ENCODE measurements at regions of chr17 and their contacts with region 1.

Region 1: DNA sequence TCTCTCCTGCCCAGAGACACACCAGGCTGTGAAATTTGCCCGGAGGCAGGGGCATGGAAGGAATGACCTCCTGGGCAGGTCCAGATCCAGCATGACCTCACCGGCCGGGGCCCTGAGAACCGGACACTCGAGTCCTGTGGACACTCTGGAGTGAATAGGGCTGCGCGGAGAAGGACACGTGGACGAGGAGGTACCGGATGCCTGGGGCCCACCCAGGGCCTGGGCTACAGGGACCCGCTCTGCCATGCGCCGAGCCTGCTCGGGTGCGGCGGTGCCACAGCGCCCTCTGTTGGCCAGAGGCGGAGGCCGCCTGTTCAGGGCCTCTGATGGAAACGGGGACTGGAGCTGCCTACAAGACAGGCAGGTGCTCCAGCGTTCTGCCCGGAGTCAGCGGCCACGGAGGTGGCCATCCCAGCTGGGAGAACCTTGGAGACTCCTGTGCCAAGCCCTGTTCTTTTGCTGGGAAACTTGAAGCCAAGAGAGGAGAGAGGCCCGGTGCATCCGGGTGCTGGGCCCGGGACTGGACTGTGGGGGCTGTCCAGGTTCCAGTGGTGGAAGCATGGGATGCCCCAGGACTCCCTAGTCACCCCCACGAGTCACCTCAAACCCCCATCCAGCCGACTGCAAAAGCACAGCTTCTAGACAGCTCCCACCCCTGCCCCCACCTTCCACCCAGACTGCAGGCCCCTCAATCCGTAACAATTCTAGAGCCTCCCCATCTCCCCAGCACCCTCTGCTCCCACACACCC is 19.3 kb upstream of the NXPH3 start:
- DNase-seq: peak; percentile 61 to 63
- H3K4me3 ChIP-seq: no peak overlapping the region
- H3K27ac ChIP-seq: no peak overlapping the region
- H3K4me1 ChIP-seq: peaks cover 0 to 17% (median 6%) of the 10 kb centered on the region in 4 donors
- H3K27me3 ChIP-seq: peaks cover 0 to 30% of the 10 kb centered on the region in 2 donors
- CTCF ChIP-seq: peak; percentile 96 to 98

Region 2: GRCh38 chr17:49361902-49362722 is 194.3 kb before region 1 on chr17 and contains the start of gene ZNF652:
- intact Hi-C with region 1: no loop called
- DNase-seq: peak; percentile 88 to 95
- H3K4me3 ChIP-seq: peak within 1 kb of the TSS; percentile 89
- H3K27ac ChIP-seq: peak within 1 kb of the TSS; percentile 83 to 92
- H3K4me1 ChIP-seq: peaks cover 0 to 26% (median 11%) of the 10 kb centered on the region in 4 donors
- H3K27me3 ChIP-seq: no peaks in the 10 kb centered on the region
- CTCF ChIP-seq: no peak

Region 3: GRCh38 chr17:49434821-49435670 is 121.4 kb before region 1 on chr17:
- intact Hi-C with region 1: loop called (anchors 1 kb)
- DNase-seq: peak in 1 of 2 donors; percentile 59
- H3K4me3 ChIP-seq: no peak overlapping the region
- H3K27ac ChIP-seq: no peak overlapping the region
- H3K4me1 ChIP-seq: peaks cover 0 to 7% (median 0%) of the 10 kb centered on the region in 4 donors
- H3K27me3 ChIP-seq: peaks cover 0 to 30% of the 10 kb centered on the region in 2 donors
- CTCF ChIP-seq: peak; percentile 53 to 71

Region 4: DNA sequence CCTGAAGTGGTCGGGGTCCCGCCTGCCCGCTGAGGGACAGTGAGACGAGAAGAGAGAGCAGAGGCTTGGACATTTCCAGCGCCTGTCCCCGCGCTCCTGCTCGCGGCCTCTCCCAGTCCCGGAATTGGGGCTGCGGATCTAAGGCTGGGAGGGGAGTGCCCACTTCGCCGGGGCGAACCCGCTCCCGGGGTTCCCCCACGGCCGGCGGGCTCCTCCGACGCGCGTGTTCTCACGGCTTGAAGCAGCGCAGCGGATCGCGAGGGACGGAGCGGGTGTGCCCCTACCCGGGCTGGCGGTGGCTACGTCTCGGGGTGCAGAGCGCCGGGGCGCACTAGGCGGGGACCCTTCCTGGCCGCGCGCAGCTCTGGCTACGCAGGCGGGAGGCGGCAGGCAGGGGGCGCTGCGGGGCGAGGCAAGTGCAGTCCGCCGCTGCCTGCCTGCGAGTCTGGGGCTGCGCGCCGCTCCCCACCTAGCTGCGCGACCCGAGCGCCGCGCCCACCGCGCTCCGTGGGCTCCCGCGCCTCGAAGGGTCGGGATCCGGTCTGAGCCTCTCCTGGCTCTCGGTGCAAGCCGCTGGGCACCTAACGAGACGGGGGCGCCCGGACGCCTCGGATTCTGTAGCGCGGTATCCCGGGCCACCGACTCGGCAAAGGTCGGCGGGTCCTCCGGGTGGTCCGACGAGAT is 60.1 kb before region 1 on chr17:
- intact Hi-C with region 1: loop called (anchors 5 kb)
- DNase-seq: peak; percentile 75 to 85
- H3K4me3 ChIP-seq: peak overlapping the region; percentile 49 to 63
- H3K27ac ChIP-seq: peak overlapping the region; percentile 47 to 57
- H3K4me1 ChIP-seq: peaks cover 0 to 39% (median 34%) of the 10 kb centered on the region in 4 donors
- H3K27me3 ChIP-seq: peaks cover 0 to 19% of the 10 kb centered on the region in 2 donors
- CTCF ChIP-seq: peak; percentile 86 to 87

Region 5: GRCh38 chr17:49588726-49589576 is 32.6 kb after region 1 on chr17:
- intact Hi-C with region 1: no loop called
- DNase-seq: peak in 1 of 2 donors; percentile 78
- H3K4me3 ChIP-seq: no peak overlapping the region
- H3K27ac ChIP-seq: peak overlapping the region; percentile 80 to 83
- H3K4me1 ChIP-seq: peaks cover 0 to 54% (median 28%) of the 10 kb centered on the region in 4 donors
- H3K27me3 ChIP-seq: no peaks in the 10 kb centered on the region
- CTCF ChIP-seq: no peak